CD4-positive, alpha-beta memory T cell (primary cell): ENCODE measurements at regions of chr5 and their contacts with region 1.

Region 1: GRCh38 chr5:148730943-148731861 is 76.9 kb upstream of the HTR4 start:
- DNase-seq: peak; percentile 68 to 76 (median 72)
- H3K4me3 ChIP-seq: peak overlapping the region in 1 of 2 donors; percentile 36
- H3K4me3 Mint-ChIP-seq: peak overlapping the region; percentile 77 to 88 (median 84)
- H3K27ac ChIP-seq: no peak overlapping the region
- H3K27ac Mint-ChIP-seq: peak overlapping the region in 5 of 7 donors; percentile 55 to 83 (median 61)
- H3K4me1 ChIP-seq: peaks cover 10% of the 10 kb centered on the region
- H3K4me1 Mint-ChIP-seq: peaks cover 3 to 16% (median 11%) of the 10 kb centered on the region in 4 donors
- H3K27me3 ChIP-seq: no peaks in the 10 kb centered on the region
- H3K27me3 Mint-ChIP-seq: peaks cover 1 to 3% of the 10 kb centered on the region in 2 donors

Region 2: DNA sequence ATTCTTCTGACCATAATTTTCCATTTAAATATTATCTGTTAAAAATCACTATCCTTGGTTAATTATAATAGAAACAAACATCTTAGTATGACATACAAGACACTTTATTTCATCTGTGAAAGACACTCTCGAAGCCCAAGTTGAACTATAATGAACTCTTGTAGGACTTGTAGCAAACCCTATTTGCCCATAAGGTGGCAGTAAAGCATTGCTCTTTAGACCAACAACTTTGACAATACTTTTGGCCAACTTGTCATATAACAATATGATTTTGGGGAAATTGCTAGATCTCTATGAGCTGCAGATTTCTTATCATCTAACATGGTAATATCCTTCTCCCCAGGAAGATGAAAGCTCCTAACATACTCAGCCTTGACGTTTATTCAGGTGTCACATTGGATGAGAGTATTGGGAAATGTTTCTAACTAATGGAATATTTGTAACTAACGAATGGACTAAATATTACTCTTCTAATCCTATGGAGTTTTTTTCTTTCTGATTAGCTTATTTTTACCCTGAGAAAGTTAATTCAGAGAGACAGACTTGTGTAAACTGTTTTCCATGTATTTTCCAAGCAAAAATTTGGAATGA is 551.9 kb before region 1 on chr5:
- CTCF ChIA-PET with region 1: interaction called, 23 read pairs
- POLR2A ChIA-PET with region 1: no interaction called
- intact Hi-C with region 1: loop called (anchors 1 kb)
- DNase-seq: peak; percentile 28 to 45 (median 38)
- H3K4me3 ChIP-seq: no peak overlapping the region
- H3K4me3 Mint-ChIP-seq: no peak overlapping the region
- H3K27ac ChIP-seq: no peak overlapping the region
- H3K27ac Mint-ChIP-seq: no peak overlapping the region
- H3K4me1 ChIP-seq: no peaks in the 10 kb centered on the region
- H3K4me1 Mint-ChIP-seq: no peaks in the 10 kb centered on the region
- H3K27me3 ChIP-seq: no peaks in the 10 kb centered on the region
- H3K27me3 Mint-ChIP-seq: peaks cover 2 to 4% of the 10 kb centered on the region in 2 donors

Region 3: DNA sequence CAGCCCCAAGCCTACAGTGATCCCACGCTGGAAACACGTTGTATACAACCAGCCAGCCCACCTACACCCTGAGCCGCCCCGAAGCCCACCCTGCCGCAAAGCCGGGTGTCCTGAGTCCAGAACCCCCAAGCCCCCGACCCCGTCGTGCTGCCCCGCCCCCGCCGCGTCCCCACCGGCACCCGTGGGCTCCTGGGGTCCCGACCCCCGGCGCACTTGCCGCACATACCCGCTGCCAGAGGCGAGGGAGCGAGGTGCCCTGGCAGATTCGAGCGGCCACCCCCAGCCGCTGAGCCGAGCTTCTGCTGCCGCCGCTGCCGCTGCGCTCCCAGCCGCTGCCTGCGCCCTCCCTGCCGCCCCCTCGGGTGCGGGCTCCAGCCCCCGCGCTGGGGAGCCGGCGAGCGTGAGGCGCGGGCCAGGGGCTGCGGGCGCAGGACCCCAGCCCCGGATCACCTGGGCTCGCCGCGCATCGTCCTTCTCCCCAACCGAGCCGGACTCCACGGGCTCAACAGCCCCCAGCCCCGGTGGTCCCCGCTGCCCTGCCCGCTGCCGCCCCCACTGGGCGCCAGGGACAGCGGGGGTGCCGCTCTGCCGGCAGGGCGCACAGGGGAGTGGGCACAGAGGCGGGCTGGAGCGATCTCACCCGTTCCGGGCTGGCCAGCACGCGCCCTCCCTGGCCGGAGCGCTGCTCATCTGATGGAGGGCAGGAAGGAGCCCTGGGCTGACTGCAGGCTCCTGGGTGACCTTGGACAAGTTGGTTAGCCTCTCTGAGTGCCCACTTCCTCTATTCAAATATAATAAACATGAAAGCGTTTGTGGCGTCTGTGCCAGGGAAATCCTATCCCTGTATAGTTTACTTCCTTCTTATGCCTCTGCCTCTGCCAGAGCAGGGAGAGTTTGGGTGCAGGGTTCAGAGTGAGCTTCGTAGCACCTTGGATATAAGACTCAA is 77.1 kb before region 1 on chr5 and contains the start of gene HTR4:
- CTCF ChIA-PET with region 1: no interaction called
- POLR2A ChIA-PET with region 1: no interaction called
- intact Hi-C with region 1: no loop called
- DNase-seq: no peak
- H3K4me3 ChIP-seq: no peak within 1 kb of the TSS
- H3K4me3 Mint-ChIP-seq: no peak within 1 kb of the TSS
- H3K27ac ChIP-seq: no peak within 1 kb of the TSS
- H3K27ac Mint-ChIP-seq: no peak within 1 kb of the TSS
- H3K4me1 ChIP-seq: no peaks in the 10 kb centered on the region
- H3K4me1 Mint-ChIP-seq: peaks cover 0 to 4% (median 3%) of the 10 kb centered on the region in 4 donors
- H3K27me3 ChIP-seq: no peaks in the 10 kb centered on the region
- H3K27me3 Mint-ChIP-seq: peaks cover 32 to 48% of the 10 kb centered on the region in 2 donors
- total RNA-seq, gene HTR4: not detected

Region 4: DNA sequence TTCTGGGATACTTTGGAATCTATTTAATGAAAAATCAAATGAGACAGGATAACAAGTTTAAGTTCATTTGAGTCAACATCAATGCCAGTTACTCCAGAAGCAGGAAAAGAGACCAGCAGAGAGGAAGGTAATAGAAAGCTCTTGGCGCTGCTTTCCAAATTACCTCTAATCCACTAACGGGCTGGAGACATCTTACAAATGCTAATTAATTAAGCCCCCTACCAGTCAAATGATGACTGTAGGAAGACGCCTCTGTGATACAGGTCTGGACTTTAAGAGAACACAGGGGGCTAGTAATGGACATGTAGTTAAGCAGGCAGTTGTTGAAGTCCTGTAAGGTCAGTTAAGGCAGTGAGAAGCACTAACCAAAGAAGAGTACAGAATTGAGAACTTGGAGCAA is 11.6 kb before region 1 on chr5:
- CTCF ChIA-PET with region 1: interaction called, 51 read pairs
- POLR2A ChIA-PET with region 1: no interaction called
- intact Hi-C with region 1: no loop called
- DNase-seq: no peak
- H3K4me3 ChIP-seq: no peak overlapping the region
- H3K4me3 Mint-ChIP-seq: no peak overlapping the region
- H3K27ac ChIP-seq: no peak overlapping the region
- H3K27ac Mint-ChIP-seq: no peak overlapping the region
- H3K4me1 ChIP-seq: no peaks in the 10 kb centered on the region
- H3K4me1 Mint-ChIP-seq: no peaks in the 10 kb centered on the region
- H3K27me3 ChIP-seq: no peaks in the 10 kb centered on the region
- H3K27me3 Mint-ChIP-seq: peaks cover 13 to 18% of the 10 kb centered on the region in 2 donors

Region 5: GRCh38 chr5:148805326-148806290 is 74.4 kb after region 1 on chr5:
- CTCF ChIA-PET with region 1: interaction called, 5 read pairs
- POLR2A ChIA-PET with region 1: no interaction called
- intact Hi-C with region 1: loop called (anchors 5 kb)
- DNase-seq: no peak
- H3K4me3 ChIP-seq: no peak overlapping the region
- H3K4me3 Mint-ChIP-seq: peak overlapping the region in 1 of 8 donors; percentile 51
- H3K27ac ChIP-seq: no peak overlapping the region
- H3K27ac Mint-ChIP-seq: peak overlapping the region in 2 of 7 donors; percentile 23 to 43
- H3K4me1 ChIP-seq: peaks cover 24% of the 10 kb centered on the region
- H3K4me1 Mint-ChIP-seq: peaks cover 17 to 33% (median 25%) of the 10 kb centered on the region in 4 donors
- H3K27me3 ChIP-seq: no peaks in the 10 kb centered on the region
- H3K27me3 Mint-ChIP-seq: peaks cover 4 to 12% of the 10 kb centered on the region in 2 donors

Region 6: DNA sequence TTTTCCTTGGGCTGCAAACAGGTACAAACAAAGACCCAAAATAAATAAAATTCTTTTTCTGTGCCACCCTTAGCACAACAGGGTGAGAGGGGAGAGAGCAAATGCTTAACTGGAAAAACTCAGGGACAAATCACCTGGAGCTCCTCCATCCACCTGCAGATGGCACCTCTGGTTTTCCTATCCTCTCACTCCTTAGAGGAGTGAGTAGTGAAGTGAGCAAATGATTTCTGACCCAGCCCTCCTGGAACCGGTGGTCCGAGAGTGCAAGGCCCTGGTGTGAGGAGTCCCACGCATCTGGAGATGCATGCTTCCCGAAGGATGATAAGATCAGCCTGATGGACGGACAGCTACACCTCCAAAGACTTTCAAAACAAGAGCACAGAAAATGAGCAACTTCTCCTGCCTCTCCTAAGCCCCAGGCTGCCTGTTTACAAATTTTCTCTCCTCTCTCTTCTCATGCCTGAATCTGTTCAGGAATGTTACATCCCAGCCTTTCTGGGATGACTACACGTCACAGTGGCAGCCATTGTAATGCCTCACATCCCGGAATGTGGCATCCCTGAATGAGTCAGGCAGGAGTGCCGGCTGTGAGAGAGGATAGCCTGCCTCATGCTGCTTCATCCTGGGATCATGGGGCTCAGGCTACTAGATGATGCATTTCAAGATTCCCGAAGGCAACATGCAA is 181.7 kb after region 1 on chr5:
- CTCF ChIA-PET with region 1: no interaction called
- POLR2A ChIA-PET with region 1: no interaction called
- intact Hi-C with region 1: no loop called
- DNase-seq: no peak
- H3K4me3 ChIP-seq: no peak overlapping the region
- H3K4me3 Mint-ChIP-seq: no peak overlapping the region
- H3K27ac ChIP-seq: no peak overlapping the region
- H3K27ac Mint-ChIP-seq: peak overlapping the region in 1 of 7 donors; percentile 43
- H3K4me1 ChIP-seq: peaks cover 9% of the 10 kb centered on the region
- H3K4me1 Mint-ChIP-seq: peaks cover 9 to 31% (median 19%) of the 10 kb centered on the region in 4 donors
- H3K27me3 ChIP-seq: no peaks in the 10 kb centered on the region
- H3K27me3 Mint-ChIP-seq: no peaks in the 10 kb centered on the region

Region 7: DNA sequence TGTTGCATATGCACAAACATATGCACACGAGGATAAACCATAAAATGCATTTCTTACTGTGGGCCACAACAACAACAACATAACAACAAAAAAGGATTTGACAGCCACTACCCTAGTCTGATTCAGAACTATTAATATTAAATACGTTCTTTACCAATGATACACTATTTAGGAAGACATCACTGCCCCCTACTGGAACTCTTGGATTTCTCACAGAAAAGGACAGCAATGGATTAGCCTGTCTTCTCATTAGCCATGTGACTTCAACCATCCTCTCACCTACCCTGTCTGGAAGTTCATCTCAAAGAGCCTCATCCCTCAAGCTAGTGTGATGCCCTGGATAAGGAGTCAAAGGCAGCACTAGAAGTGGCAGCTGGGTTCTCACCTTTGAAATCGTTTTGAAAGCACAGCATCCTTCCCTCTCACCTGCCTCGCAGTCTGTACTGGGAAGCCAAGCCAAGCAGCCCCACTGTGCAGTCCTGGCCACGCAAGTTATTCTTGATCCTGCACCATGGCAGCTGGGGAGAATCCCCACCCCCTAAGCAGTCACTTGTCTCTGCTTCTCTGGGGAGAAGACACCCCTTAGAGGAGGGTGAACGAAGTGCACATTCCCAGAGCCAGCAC is 267.1 kb after region 1 on chr5:
- CTCF ChIA-PET with region 1: interaction called, 122 read pairs
- POLR2A ChIA-PET with region 1: no interaction called
- intact Hi-C with region 1: loop called (anchors 1 kb)
- DNase-seq: peak; percentile 44 to 55 (median 49)
- H3K4me3 ChIP-seq: no peak overlapping the region
- H3K4me3 Mint-ChIP-seq: no peak overlapping the region
- H3K27ac ChIP-seq: no peak overlapping the region
- H3K27ac Mint-ChIP-seq: no peak overlapping the region
- H3K4me1 ChIP-seq: no peaks in the 10 kb centered on the region
- H3K4me1 Mint-ChIP-seq: peaks cover 0 to 2% (median 0%) of the 10 kb centered on the region in 4 donors
- H3K27me3 ChIP-seq: no peaks in the 10 kb centered on the region
- H3K27me3 Mint-ChIP-seq: peaks cover 6% of the 10 kb centered on the region in 2 donors